CD8-positive, alpha-beta memory T cell (primary cell): ENCODE measurements at regions of chr1 and their contacts with region 1.

Region 1: GRCh38 chr1:25895365-25895993 is 10.7 kb downstream of the STMN1 start:
- DNase-seq: peak; percentile 85 to 93 (median 90)
- H3K4me3 ChIP-seq: no peak overlapping the region
- H3K4me3 Mint-ChIP-seq: no peak overlapping the region
- H3K27ac ChIP-seq: no peak overlapping the region
- H3K27ac Mint-ChIP-seq: peak overlapping the region in 5 of 8 donors; percentile 21 to 64 (median 48)
- H3K4me1 ChIP-seq: peaks cover 5% of the 10 kb centered on the region
- H3K4me1 Mint-ChIP-seq: peaks cover 7 to 9% (median 9%) of the 10 kb centered on the region in 3 donors
- H3K27me3 ChIP-seq: no peaks in the 10 kb centered on the region
- H3K27me3 Mint-ChIP-seq: no peaks in the 10 kb centered on the region

Region 2: GRCh38 chr1:25140073-25140797 is 755.2 kb before region 1 on chr1:
- CTCF ChIA-PET with region 1: no interaction called
- POLR2A ChIA-PET with region 1: no interaction called
- DNase-seq: no peak
- H3K4me3 ChIP-seq: no peak overlapping the region
- H3K4me3 Mint-ChIP-seq: no peak overlapping the region
- H3K27ac ChIP-seq: no peak overlapping the region
- H3K27ac Mint-ChIP-seq: peak overlapping the region in 1 of 8 donors; percentile 52
- H3K4me1 ChIP-seq: no peaks in the 10 kb centered on the region
- H3K4me1 Mint-ChIP-seq: no peaks in the 10 kb centered on the region
- H3K27me3 ChIP-seq: peaks cover 10% of the 10 kb centered on the region
- H3K27me3 Mint-ChIP-seq: peaks cover 12 to 41% of the 10 kb centered on the region in 2 donors

Region 3: DNA sequence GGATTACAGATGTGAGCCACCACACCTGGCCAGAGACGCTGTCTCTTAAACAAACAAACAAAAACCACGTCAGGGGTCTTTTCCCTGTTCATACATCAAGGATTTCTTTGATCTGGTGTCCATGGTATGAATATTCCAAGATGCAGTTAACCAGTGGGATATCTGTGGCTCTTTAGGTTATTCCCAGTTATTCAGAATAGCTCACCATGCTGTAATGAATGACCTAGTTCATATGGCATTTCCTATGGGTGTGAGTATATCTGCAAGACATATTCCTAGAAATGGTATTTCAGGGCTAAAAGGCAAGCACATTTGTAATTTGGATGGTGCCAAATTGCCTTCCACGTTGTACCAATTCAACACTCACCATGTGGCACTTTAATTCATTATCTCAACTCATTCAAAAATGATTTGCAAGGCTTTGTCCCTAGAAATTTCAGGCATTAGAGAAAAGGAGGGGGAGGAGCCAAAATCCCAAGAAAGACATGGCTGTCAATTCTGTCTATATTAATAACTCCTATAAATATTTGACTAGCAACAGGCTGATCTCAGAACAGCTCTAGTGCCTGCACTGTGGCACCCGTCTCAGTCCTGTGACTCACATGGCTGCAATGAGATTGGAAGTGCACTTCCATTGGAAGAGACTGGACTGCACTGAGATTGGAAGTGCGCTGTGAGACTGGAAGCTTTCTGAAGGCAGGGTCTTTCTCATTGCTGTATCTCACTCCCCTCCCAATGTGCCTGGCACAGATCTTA is 16.8 kb after region 1 on chr1:
- CTCF ChIA-PET with region 1: interaction called, 30 read pairs
- POLR2A ChIA-PET with region 1: no interaction called
- DNase-seq: no peak
- H3K4me3 ChIP-seq: no peak overlapping the region
- H3K4me3 Mint-ChIP-seq: no peak overlapping the region
- H3K27ac ChIP-seq: no peak overlapping the region
- H3K27ac Mint-ChIP-seq: peak overlapping the region in 1 of 8 donors; percentile 19
- H3K4me1 ChIP-seq: no peaks in the 10 kb centered on the region
- H3K4me1 Mint-ChIP-seq: peaks cover 2 to 7% (median 3%) of the 10 kb centered on the region in 3 donors
- H3K27me3 ChIP-seq: no peaks in the 10 kb centered on the region
- H3K27me3 Mint-ChIP-seq: no peaks in the 10 kb centered on the region

Region 4: GRCh38 chr1:25958465-25958864 is 63.0 kb after region 1 on chr1:
- CTCF ChIA-PET with region 1: interaction called, 10 read pairs
- POLR2A ChIA-PET with region 1: no interaction called
- DNase-seq: no peak
- H3K4me3 ChIP-seq: no peak overlapping the region
- H3K4me3 Mint-ChIP-seq: no peak overlapping the region
- H3K27ac ChIP-seq: no peak overlapping the region
- H3K27ac Mint-ChIP-seq: peak overlapping the region in 4 of 8 donors; percentile 47 to 88 (median 66)
- H3K4me1 ChIP-seq: no peaks in the 10 kb centered on the region
- H3K4me1 Mint-ChIP-seq: peaks cover 0 to 15% (median 10%) of the 10 kb centered on the region in 3 donors
- H3K27me3 ChIP-seq: no peaks in the 10 kb centered on the region
- H3K27me3 Mint-ChIP-seq: no peaks in the 10 kb centered on the region

Region 5: DNA sequence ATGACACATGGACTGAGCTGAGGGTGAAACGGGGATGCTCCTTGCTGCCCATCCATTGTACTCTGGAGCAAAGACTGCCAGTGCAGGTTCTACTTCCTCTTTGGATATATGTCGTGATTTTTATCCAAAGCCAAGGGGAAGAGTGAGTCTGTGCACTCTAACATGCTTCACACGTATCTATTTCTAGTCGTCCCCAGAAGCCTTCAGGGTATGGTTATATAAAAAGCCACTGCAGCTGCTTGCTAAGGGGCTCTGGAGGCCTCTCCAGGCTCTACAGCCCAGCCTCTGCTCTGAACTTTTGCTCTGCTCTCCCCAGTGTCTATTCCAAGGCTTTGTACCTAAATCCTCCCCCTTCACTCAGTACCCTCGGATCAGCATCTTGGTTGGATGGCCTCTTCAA is 82.3 kb after region 1 on chr1:
- CTCF ChIA-PET with region 1: interaction called, 10 read pairs
- POLR2A ChIA-PET with region 1: no interaction called
- DNase-seq: no peak
- H3K4me3 ChIP-seq: no peak overlapping the region
- H3K4me3 Mint-ChIP-seq: no peak overlapping the region
- H3K27ac ChIP-seq: no peak overlapping the region
- H3K27ac Mint-ChIP-seq: peak overlapping the region in 1 of 8 donors; percentile 7
- H3K4me1 ChIP-seq: no peaks in the 10 kb centered on the region
- H3K4me1 Mint-ChIP-seq: peaks cover 3 to 16% (median 6%) of the 10 kb centered on the region in 3 donors
- H3K27me3 ChIP-seq: no peaks in the 10 kb centered on the region
- H3K27me3 Mint-ChIP-seq: peaks cover 0 to 1% of the 10 kb centered on the region in 2 donors

Region 6: GRCh38 chr1:25997828-25998761 is 102.6 kb after region 1 on chr1 and contains the start of gene PAFAH2:
- CTCF ChIA-PET with region 1: interaction called, 204 read pairs
- POLR2A ChIA-PET with region 1: interaction called, 21 read pairs
- DNase-seq: peak; percentile 94 to 98 (median 96)
- H3K4me3 ChIP-seq: peak within 1 kb of the TSS; percentile 84
- H3K4me3 Mint-ChIP-seq: peak within 1 kb of the TSS; percentile 88 to 96 (median 94)
- H3K27ac ChIP-seq: peak within 1 kb of the TSS; percentile 88
- H3K27ac Mint-ChIP-seq: peak within 1 kb of the TSS; percentile 96 to 100 (median 99)
- H3K4me1 ChIP-seq: peaks cover 26% of the 10 kb centered on the region
- H3K4me1 Mint-ChIP-seq: peaks cover 33 to 43% (median 37%) of the 10 kb centered on the region in 3 donors
- H3K27me3 ChIP-seq: no peaks in the 10 kb centered on the region
- H3K27me3 Mint-ChIP-seq: peaks cover 0 to 3% of the 10 kb centered on the region in 2 donors
- total RNA-seq, gene PAFAH2: 11.8 to 12.1 TPM